ENCODE measurements at regions of chr10 and their contacts with region 1.

Region 1: DNA sequence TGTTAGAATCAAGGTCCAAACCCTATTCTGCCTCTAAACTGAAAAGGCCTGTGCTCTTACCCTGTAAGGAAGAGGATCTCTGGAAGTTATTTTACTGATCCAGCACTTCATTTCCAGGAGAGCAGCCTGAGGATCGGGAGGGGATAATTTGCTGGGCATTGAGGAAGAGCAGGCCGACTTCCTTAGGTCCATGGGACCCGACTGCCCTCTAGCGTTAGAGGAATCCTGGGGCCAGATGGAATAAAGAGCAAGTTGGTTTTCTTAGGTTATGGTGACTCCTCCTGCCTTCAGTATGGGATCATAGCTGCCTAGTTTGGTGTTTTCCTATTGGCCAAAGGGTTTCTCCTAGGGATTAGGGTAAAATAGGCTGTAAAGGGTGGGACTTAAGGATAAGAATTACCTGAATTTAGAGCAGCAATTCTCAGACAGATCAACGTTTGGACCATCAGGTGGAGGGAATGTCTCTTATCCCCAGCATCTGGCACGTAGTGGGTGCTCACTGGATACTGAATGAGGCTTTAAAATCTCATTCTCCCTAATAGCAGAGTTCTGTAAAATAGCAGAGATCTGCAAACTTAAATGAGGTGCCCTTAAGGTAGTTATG is 40.0 kb upstream of the SORBS1 start:
- DNase-seq: peak; percentile 64 to 74
- H3K4me3 ChIP-seq: no peak overlapping the region
- H3K27ac ChIP-seq: no peak overlapping the region
- H3K4me1 ChIP-seq: no peaks in the 10 kb centered on the region
- H3K27me3 ChIP-seq: no peaks in the 10 kb centered on the region
- CTCF ChIP-seq: peak; percentile 80 to 96 (median 92)
- POLR2A ChIP-seq: no peak

Region 2: GRCh38 chr10:95374597-95375209 is 226.5 kb before region 1 on chr10:
- intact Hi-C with region 1: loop called (anchors 5 kb)
- DNase-seq: peak; percentile 49 to 74
- H3K4me3 ChIP-seq: no peak overlapping the region
- H3K27ac ChIP-seq: no peak overlapping the region
- H3K4me1 ChIP-seq: no peaks in the 10 kb centered on the region
- H3K27me3 ChIP-seq: no peaks in the 10 kb centered on the region
- CTCF ChIP-seq: peak; percentile 90 to 93 (median 90)
- POLR2A ChIP-seq: no peak

Region 3: GRCh38 chr10:95430231-95430951 is 170.8 kb before region 1 on chr10:
- intact Hi-C with region 1: loop called (anchors 10 kb)
- DNase-seq: peak in 1 of 2 donors; percentile 48
- H3K4me3 ChIP-seq: no peak overlapping the region
- H3K27ac ChIP-seq: peak overlapping the region in 1 of 2 donors; percentile 40
- H3K4me1 ChIP-seq: peaks cover 0 to 7% of the 10 kb centered on the region in 2 donors
- H3K27me3 ChIP-seq: no peaks in the 10 kb centered on the region
- CTCF ChIP-seq: peak; percentile 92 to 97 (median 95)
- POLR2A ChIP-seq: no peak

Region 4: DNA sequence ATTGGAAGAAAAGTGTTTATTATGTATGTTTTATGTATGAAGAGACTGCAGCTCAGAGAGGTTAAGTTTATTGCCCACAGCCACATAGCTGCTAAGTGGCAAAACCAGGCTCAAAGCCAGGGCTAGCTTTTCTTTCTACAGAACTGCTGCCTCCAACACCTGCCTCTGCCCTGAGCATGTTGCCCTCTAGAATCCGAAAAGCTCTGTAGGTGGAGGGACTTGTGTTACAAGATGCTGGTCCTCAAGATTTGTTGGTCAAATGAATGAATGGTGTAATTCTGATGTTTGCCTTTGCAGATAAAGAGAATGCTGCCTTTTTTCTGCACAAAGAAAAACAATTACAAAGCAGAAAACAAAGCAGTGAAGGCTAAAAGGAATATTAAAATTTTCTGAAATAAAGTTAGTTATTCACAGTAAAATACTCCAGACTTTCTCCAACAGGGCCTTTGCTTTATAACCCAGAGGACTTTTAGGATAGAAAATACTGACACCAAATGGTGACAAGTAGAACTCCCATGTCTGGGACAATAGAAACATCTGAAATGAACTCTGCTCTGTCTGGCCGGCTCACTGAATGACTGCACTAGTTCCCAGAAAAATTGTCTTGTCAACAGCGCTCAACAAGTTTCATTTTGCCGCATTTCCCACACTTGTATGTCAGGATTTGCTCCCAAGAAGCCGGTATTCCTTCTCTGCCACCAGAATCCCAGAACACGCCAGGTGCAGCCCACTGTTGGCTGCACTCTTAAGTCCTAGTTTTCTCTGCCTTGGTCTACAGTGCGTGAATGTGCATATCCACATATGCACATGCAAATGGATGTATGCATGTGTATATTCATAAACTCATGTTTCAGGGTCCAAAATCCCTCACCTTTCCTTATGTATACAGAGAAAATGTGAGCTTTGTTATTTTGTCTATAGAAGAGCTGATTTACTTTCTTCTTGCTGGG is 692.0 kb after region 1 on chr10:
- intact Hi-C with region 1: no loop called
- DNase-seq: no peak
- H3K4me3 ChIP-seq: no peak overlapping the region
- H3K27ac ChIP-seq: no peak overlapping the region
- H3K4me1 ChIP-seq: no peaks in the 10 kb centered on the region
- H3K27me3 ChIP-seq: peaks cover 0 to 4% of the 10 kb centered on the region in 2 donors
- CTCF ChIP-seq: peak; percentile 33 to 61 (median 57)
- POLR2A ChIP-seq: no peak

Measured in breast epithelium (tissue), 4 donors.